Prostate gland (tissue), 2 donors: ENCODE measurements at regions of chr20 and their contacts with region 1.

Region 1: DNA sequence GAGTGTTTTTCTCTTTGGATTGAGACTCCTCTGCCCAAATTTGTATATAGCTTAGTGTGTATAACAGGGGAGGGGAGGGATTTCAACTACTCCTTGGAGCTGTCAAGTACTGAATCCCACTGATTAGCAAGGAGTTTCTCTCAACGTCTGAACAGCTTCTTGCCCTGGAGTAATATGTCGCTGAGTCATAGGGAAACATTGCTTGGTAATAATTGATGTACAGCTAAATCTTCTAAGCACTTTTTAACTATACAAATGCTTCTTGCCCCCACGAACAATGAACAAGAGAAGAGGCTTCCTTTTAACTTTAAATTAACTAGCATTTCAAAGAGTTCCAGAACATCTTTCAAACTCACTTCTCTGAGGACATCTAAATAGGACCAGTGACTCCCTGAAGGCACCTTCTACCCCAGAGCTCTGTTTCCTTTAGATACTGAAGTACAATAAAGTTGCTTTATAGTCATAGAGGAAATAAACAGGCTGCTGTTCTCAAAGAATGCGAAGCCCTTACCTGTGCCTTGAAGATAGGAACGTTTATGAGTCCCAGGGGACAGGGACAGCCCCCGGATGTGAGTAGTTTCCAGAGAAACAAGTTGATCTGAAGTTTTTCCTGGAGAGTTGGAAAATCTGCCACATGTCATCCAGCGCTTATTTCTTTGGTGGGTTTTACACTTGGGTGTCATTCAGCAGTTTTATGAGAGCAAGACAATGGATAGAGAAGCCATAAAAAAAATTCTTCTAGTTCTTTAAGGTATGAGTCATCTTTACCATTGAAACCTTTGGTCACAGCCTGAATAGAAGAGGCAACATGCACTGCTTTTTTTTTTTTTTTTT is 462.5 kb upstream of the BTBD3 start:
- DNase-seq: no peak
- H3K4me3 ChIP-seq: no peak overlapping the region
- H3K27ac ChIP-seq: no peak overlapping the region
- H3K4me1 ChIP-seq: no peaks in the 10 kb centered on the region
- H3K27me3 ChIP-seq: no peaks in the 10 kb centered on the region
- CTCF ChIP-seq: no peak
- POLR2A ChIP-seq: no peak

Region 2: GRCh38 chr20:11401988-11402387 is 53.2 kb before region 1 on chr20:
- intact Hi-C with region 1: loop called (anchors 5 kb)
- DNase-seq: no peak
- H3K4me3 ChIP-seq: no peak overlapping the region
- H3K27ac ChIP-seq: no peak overlapping the region
- H3K4me1 ChIP-seq: no peaks in the 10 kb centered on the region
- H3K27me3 ChIP-seq: no peaks in the 10 kb centered on the region
- CTCF ChIP-seq: no peak
- POLR2A ChIP-seq: no peak